Transverse colon (tissue), 4 donors: ENCODE measurements at regions of chr7 and their contacts with region 1.

Region 1: GRCh38 chr7:5083311-5083711 is 37.7 kb downstream of the RBAK start:
- DNase-seq: no peak
- H3K4me3 ChIP-seq: no peak overlapping the region
- H3K27ac ChIP-seq: no peak overlapping the region
- H3K4me1 ChIP-seq: no peaks in the 10 kb centered on the region
- H3K27me3 ChIP-seq: peaks cover 19% of the 10 kb centered on the region
- CTCF ChIP-seq: no peak
- EP300 ChIP-seq: no peak
- POLR2A ChIP-seq: no peak

Region 2: GRCh38 chr7:4791738-4792536 is 291.4 kb before region 1 on chr7:
- in situ Hi-C with region 1: loop called in 1 of 4 experiments (anchors 10 kb)
- intact Hi-C with region 1: loop called (anchors 5 kb)
- DNase-seq: peak; percentile 62
- H3K4me3 ChIP-seq: peak overlapping the region in 3 of 4 donors; percentile 30 to 49 (median 47)
- H3K27ac ChIP-seq: peak overlapping the region; percentile 33 to 69 (median 54)
- H3K4me1 ChIP-seq: peaks cover 0 to 15% (median 13%) of the 10 kb centered on the region in 4 donors
- H3K27me3 ChIP-seq: no peaks in the 10 kb centered on the region
- CTCF ChIP-seq: peak; percentile 51 to 90 (median 73)
- EP300 ChIP-seq: no peak
- POLR2A ChIP-seq: no peak

Region 3: DNA sequence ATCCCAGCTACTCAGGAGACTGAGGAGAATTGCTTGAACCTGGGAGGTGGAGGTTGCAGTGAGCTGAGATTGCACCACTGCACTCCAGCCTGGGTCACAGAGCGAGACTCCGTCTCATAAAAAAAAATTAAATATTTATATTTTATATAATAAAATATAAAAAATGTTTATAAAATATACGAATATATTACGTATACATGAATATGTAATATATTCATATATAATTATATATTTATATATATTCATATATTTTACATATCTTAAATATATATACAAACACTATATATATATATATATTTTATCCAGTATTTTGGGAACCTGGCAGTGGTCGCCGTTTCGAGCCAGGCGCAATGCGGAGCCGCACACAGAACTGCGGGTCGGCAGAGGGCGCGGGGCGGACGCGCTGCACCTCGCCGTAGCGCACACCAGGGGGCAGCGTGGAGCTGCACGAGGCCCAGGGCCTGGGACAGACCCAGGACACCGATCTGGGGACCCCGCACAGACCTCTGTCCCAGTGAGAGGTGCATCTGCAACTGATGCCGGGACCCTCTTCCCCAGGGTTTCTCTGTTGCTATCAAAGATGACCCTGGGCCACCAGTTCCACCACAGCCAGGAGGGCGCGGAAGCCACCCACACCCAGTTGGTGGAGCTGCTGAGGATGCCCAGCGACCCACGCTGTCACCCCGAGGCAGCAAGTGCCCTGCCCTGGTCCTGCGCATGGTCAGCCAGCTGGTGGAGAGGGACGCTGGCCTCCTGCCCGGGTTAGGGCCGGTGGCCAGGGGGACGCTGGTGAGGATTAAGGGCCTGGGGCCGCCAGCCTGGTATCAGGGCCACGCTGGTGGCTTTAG is 285.2 kb before region 1 on chr7:
- in situ Hi-C with region 1: loop called in 1 of 4 experiments (anchors 10 kb)
- intact Hi-C with region 1: loop called (anchors 5 kb)
- DNase-seq: peak; percentile 42
- H3K4me3 ChIP-seq: no peak overlapping the region
- H3K27ac ChIP-seq: no peak overlapping the region
- H3K4me1 ChIP-seq: peaks cover 0 to 1% (median under 1%) of the 10 kb centered on the region in 4 donors
- H3K27me3 ChIP-seq: no peaks in the 10 kb centered on the region
- CTCF ChIP-seq: peak; percentile 65 to 91 (median 90)
- EP300 ChIP-seq: no peak
- POLR2A ChIP-seq: no peak

Region 4: GRCh38 chr7:4973728-4974198 is 109.5 kb before region 1 on chr7:
- in situ Hi-C with region 1: loop called in 1 of 4 experiments (anchors 10 kb)
- intact Hi-C with region 1: loop called (anchors 10 kb)
- DNase-seq: peak; percentile 93
- H3K4me3 ChIP-seq: peak overlapping the region; percentile 34 to 98 (median 75)
- H3K27ac ChIP-seq: peak overlapping the region; percentile 92 to 96 (median 94)
- H3K4me1 ChIP-seq: peaks cover 0 to 18% (median 5%) of the 10 kb centered on the region in 4 donors
- H3K27me3 ChIP-seq: no peaks in the 10 kb centered on the region
- CTCF ChIP-seq: peak; percentile 73 to 81 (median 78)
- EP300 ChIP-seq: no peak
- POLR2A ChIP-seq: peak; percentile 38

Region 5: DNA sequence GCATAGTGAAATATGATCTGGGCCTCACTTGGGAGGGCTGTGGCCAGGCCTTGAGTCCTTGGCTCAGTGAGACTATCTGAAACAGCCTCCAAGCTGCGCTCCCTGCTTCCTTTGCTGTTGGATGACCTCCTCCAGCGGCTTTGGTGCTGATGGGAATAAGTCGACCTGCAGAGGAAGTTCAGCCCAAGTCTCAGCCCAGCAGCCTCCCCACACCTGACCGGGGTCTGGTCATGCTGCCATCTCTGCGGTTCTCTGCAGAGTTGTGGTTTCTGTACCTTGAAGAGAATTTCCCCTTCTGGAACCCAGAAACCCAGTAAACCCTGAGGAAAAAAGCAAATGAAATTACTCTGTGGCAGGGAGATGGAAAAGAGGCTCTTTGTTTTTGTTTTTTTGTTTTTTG is 42.3 kb before region 1 on chr7:
- in situ Hi-C with region 1: no loop called
- intact Hi-C with region 1: no loop called
- DNase-seq: no peak
- H3K4me3 ChIP-seq: no peak overlapping the region
- H3K27ac ChIP-seq: no peak overlapping the region
- H3K4me1 ChIP-seq: peaks cover 0 to 7% (median 4%) of the 10 kb centered on the region in 4 donors
- H3K27me3 ChIP-seq: no peaks in the 10 kb centered on the region
- CTCF ChIP-seq: no peak
- EP300 ChIP-seq: no peak
- POLR2A ChIP-seq: no peak